ENCODE measurements at regions of chr5 and their contacts with region 1.

Region 1: DNA sequence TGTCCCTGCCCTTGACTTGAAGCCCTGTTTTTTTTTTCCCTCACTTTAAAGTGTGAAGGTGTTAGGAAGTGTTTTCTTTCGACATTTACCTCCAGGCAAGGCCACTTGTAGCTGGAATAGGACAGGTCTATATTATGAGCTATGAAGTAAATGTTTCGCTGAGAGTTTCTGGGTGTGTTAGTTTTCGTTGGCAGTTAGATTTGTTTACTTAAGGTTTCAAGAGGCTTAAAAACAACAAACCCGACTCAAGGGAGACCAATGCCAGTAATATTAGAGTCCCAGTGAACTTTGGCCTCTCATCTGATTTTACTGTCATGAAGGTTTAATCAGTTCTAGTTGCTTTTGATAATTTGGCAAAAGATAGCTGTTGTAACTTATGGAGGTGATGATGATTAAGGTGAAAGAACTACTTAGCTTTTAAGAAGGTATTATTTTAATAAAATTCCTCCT is 25.2 kb downstream of the OCLN start:
- DNase-seq: peak; percentile 79
- ATAC-seq: peak; percentile 83
- H3K4me3 ChIP-seq: no peak overlapping the region; a peak in 1 of 6 replicates
- H3K27ac ChIP-seq: peak overlapping the region; percentile 59
- H3K4me1 ChIP-seq: peaks cover 45% of the 10 kb centered on the region
- H3K27me3 ChIP-seq: no peaks in the 10 kb centered on the region
- CTCF ChIP-seq: no peak
- EP300 ChIP-seq: peak in 1 of 2 experiments; percentile 45; a peak in 1 of 4 replicates
- POLR2A ChIP-seq: no peak
- RAD21 ChIP-seq: no peak

Region 2: GRCh38 chr5:69467442-69468225 is 50.2 kb before region 1 on chr5:
- CTCF ChIA-PET with region 1: no interaction called
- POLR2A ChIA-PET with region 1: no interaction called
- in situ Hi-C with region 1: no loop called
- intact Hi-C with region 1: loop called (anchors 1 kb)
- DNase-seq: no peak
- ATAC-seq: no peak
- H3K4me3 ChIP-seq: no peak overlapping the region
- H3K27ac ChIP-seq: no peak overlapping the region
- H3K4me1 ChIP-seq: peaks cover 13% of the 10 kb centered on the region
- H3K27me3 ChIP-seq: no peaks in the 10 kb centered on the region
- CTCF ChIP-seq: no peak
- EP300 ChIP-seq: no peak
- POLR2A ChIP-seq: no peak
- RAD21 ChIP-seq: no peak

Region 3: GRCh38 chr5:69502767-69503488 is 14.9 kb before region 1 on chr5:
- CTCF ChIA-PET with region 1: no interaction called
- POLR2A ChIA-PET with region 1: interaction called, 10 read pairs
- in situ Hi-C with region 1: no loop called
- intact Hi-C with region 1: no loop called
- DNase-seq: peak; percentile 46
- ATAC-seq: no peak
- H3K4me3 ChIP-seq: no peak overlapping the region
- H3K27ac ChIP-seq: peak overlapping the region; percentile 26
- H3K4me1 ChIP-seq: peaks cover 49% of the 10 kb centered on the region
- H3K27me3 ChIP-seq: no peaks in the 10 kb centered on the region
- CTCF ChIP-seq: no peak
- EP300 ChIP-seq: no peak
- POLR2A ChIP-seq: no peak
- RAD21 ChIP-seq: no peak

Measured in HepG2 (cell line).